ENCODE measurements at regions of chr3 and their contacts with region 1.

Region 1: DNA sequence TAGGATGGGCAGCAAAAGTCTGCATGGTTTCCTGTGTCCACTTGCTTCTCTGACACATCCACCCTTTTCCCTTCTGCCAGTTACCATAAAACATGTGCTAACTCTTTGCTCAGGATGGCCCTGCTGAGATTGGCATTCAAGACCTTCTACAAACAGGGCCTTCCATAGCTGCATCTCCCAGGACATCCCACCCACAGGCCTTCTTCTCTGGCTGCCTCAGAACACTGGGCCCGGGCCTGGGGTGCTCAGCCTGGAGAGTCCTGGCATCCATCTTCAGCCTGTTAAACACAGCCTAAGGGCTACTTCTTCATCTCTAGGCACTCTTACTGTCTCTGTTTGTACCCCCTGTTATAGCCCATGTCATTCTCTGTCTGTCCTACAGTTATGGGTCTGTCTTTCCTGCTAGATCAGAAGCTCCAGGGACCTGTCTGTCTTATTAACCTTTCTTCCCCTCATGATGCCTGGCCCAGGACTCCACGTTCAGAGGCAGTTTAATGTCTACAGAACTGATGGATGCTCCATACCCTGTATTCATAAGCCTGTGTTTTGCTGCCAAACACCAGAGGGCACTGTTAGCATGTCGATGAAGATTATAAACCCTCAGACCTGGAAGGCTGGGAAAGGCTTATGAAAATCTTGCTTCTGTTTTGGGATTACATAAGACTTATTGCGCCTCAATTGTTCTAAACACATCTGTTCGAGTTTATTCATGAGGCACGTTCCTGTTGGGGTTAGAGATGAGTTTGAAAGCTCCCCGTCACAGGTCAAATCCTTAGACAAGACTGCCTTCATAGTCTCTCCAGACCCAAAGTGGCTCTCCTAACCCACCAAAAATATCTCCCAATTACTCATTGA is 16.5 kb downstream of the SEMA3G start:
- DNase-seq: peak; percentile 83
- H3K4me3 Mint-ChIP-seq: no peak overlapping the region
- H3K27ac Mint-ChIP-seq: no peak overlapping the region
- H3K4me1 Mint-ChIP-seq: no peaks in the 10 kb centered on the region
- H3K27me3 Mint-ChIP-seq: peaks cover 11% of the 10 kb centered on the region
- CTCF ChIP-seq: peak; percentile 63

Region 2: GRCh38 chr3:52388933-52389332 is 39.4 kb before region 1 on chr3:
- CTCF ChIA-PET with region 1: no interaction called
- POLR2A ChIA-PET with region 1: no interaction called
- intact Hi-C with region 1: no loop called
- DNase-seq: peak; percentile 11
- H3K4me3 Mint-ChIP-seq: no peak overlapping the region
- H3K27ac Mint-ChIP-seq: no peak overlapping the region
- H3K4me1 Mint-ChIP-seq: no peaks in the 10 kb centered on the region
- H3K27me3 Mint-ChIP-seq: no peaks in the 10 kb centered on the region
- CTCF ChIP-seq: no peak

Region 3: GRCh38 chr3:52455283-52456168 is 27.1 kb after region 1 on chr3 and contains the start of gene NISCH:
- CTCF ChIA-PET with region 1: interaction called, 278 read pairs
- POLR2A ChIA-PET with region 1: interaction called, 6 read pairs
- intact Hi-C with region 1: no loop called
- DNase-seq: peak; percentile 83
- H3K4me3 Mint-ChIP-seq: peak within 1 kb of the TSS; percentile 92
- H3K27ac Mint-ChIP-seq: peak within 1 kb of the TSS; percentile 95
- H3K4me1 Mint-ChIP-seq: peaks cover 26% of the 10 kb centered on the region
- H3K27me3 Mint-ChIP-seq: no peaks in the 10 kb centered on the region
- CTCF ChIP-seq: no peak
- total RNA-seq, gene NISCH: 60.5 and 69.7 TPM in 2 replicates

Measured in MCF 10A (cell line).